Heart left ventricle (tissue), 16 donors: ENCODE measurements at regions of chr15 and their contacts with region 1.

Region 1: GRCh38 chr15:68149059-68149458 is 56.1 kb downstream of the CALML4 start:
- DNase-seq: no peak
- ATAC-seq: no peak
- H3K4me3 ChIP-seq: no peak overlapping the region
- H3K27ac ChIP-seq: no peak overlapping the region
- H3K4me1 ChIP-seq: no peaks in the 10 kb centered on the region
- H3K27me3 ChIP-seq: no peaks in the 10 kb centered on the region
- CTCF ChIP-seq: no peak
- POLR2A ChIP-seq: no peak

Region 2: DNA sequence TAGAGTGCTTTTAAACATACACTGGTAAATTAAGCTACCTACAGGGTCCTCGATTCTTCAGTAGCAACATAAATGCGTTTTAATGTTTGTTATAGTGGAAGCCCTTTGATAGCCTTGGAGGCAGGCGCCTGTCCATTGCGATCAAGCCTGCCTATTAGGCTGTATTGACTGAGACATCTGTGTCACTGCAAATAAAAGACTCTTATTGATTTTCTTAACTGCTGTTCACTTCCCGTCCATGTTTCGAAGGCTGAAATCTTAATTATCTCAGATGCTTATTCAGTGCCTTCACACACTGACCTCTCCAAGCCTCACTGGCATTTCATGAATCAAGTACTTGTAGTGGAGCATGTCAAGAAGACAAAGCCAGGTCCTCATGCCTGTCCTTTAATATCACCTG is 555.5 kb before region 1 on chr15:
- intact Hi-C with region 1: no loop called
- DNase-seq: no peak
- ATAC-seq: no peak
- H3K4me3 ChIP-seq: no peak overlapping the region
- H3K27ac ChIP-seq: no peak overlapping the region
- H3K4me1 ChIP-seq: no peaks in the 10 kb centered on the region
- H3K27me3 ChIP-seq: no peaks in the 10 kb centered on the region
- CTCF ChIP-seq: no peak
- POLR2A ChIP-seq: no peak

Region 3: DNA sequence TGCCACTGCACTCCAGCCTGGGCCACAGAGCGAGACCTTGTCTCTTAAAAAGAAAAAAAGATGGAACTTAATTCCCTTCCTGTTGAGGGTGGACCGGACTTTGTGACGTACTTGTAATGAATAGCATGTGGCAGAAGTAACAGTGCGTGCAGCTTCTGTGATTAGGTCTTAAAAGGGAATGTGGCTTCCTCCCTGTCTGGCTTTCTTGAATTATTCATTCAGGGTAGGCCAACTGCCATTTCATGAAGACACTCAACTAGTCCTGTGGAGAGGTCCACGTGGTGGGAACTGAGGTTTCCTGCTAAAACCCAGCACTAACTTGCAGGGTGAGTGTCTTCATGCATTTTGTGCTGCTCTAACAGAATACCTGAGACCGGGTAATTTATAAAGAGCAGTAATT is 193.8 kb before region 1 on chr15:
- intact Hi-C with region 1: no loop called
- DNase-seq: no peak
- ATAC-seq: peak in 1 of 4 donors; percentile 23
- H3K4me3 ChIP-seq: no peak overlapping the region
- H3K27ac ChIP-seq: peak overlapping the region in 5 of 12 donors; percentile 3 to 59 (median 32)
- H3K4me1 ChIP-seq: peaks cover 0 to 10% (median 4%) of the 10 kb centered on the region in 12 donors
- H3K27me3 ChIP-seq: no peaks in the 10 kb centered on the region
- CTCF ChIP-seq: no peak
- POLR2A ChIP-seq: no peak

Region 4: GRCh38 chr15:67967871-67968431 is 181.1 kb before region 1 on chr15:
- intact Hi-C with region 1: no loop called
- DNase-seq: peak; percentile 76 to 89 (median 84)
- ATAC-seq: peak; percentile 82 to 98 (median 95)
- H3K4me3 ChIP-seq: peak overlapping the region in 10 of 12 donors; percentile 34 to 56 (median 47)
- H3K27ac ChIP-seq: peak overlapping the region in 3 of 12 donors; percentile 19 to 61 (median 47)
- H3K4me1 ChIP-seq: peaks cover 0 to 15% (median 5%) of the 10 kb centered on the region in 12 donors
- H3K27me3 ChIP-seq: no peaks in the 10 kb centered on the region
- CTCF ChIP-seq: no peak
- POLR2A ChIP-seq: no peak

Region 5: DNA sequence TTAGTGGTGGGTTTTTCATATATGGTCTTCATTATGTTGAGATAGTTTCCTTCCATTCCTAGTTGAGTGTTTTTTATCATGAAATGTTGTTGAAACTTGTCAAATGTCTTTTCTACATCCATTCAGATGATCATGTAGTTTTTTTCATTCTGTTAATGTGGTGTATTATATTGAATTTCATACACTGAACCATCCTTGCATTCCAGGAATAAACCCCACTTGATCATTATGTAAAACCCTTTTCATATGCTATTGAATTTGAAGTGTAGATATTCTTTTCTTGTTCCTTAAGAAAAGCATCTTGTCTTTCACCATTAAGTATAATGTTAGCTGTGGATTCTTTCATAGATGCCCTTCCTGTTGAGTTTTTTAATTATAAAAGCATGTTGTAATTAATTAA is 52.0 kb before region 1 on chr15:
- intact Hi-C with region 1: loop called in 1 of 10 experiments (anchors 10 kb)
- DNase-seq: no peak
- ATAC-seq: no peak
- H3K4me3 ChIP-seq: no peak overlapping the region
- H3K27ac ChIP-seq: no peak overlapping the region
- H3K4me1 ChIP-seq: peaks cover 0 to 36% (median 10%) of the 10 kb centered on the region in 12 donors
- H3K27me3 ChIP-seq: no peaks in the 10 kb centered on the region
- CTCF ChIP-seq: no peak
- POLR2A ChIP-seq: no peak

Region 6: DNA sequence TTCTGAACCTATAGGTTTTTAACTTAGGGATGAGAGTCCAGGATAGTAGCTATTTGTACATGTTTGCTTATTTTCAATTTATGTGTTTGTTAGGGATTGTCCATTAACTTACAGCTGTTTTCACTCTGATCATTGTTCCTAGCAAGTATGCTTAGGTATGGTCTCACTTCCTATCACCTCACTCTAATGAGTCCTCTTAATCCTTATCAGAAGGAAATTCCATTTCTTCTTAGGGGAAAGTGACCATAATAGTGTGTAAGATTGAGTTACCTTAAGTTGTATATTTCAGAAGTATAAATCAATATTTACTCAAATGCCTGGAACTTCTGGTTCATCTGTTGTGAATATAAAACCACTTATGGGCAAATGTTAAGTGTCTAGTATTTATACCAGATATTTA is 41.9 kb before region 1 on chr15:
- intact Hi-C with region 1: no loop called
- DNase-seq: no peak
- ATAC-seq: no peak
- H3K4me3 ChIP-seq: no peak overlapping the region
- H3K27ac ChIP-seq: no peak overlapping the region
- H3K4me1 ChIP-seq: peaks cover 0 to 45% (median 16%) of the 10 kb centered on the region in 12 donors
- H3K27me3 ChIP-seq: no peaks in the 10 kb centered on the region
- CTCF ChIP-seq: no peak
- POLR2A ChIP-seq: no peak